ENCODE measurements at regions of chr17 and their contacts with region 1.

Region 1: GRCh38 chr17:62968445-62968923 is 2.4 kb downstream of the TANC2 start:
- DNase-seq: peak; percentile 87
- H3K4me3 Mint-ChIP-seq: no peak overlapping the region
- H3K27ac Mint-ChIP-seq: no peak overlapping the region
- H3K4me1 Mint-ChIP-seq: peaks cover 25% of the 10 kb centered on the region
- H3K27me3 Mint-ChIP-seq: peaks cover 55% of the 10 kb centered on the region

Region 2: DNA sequence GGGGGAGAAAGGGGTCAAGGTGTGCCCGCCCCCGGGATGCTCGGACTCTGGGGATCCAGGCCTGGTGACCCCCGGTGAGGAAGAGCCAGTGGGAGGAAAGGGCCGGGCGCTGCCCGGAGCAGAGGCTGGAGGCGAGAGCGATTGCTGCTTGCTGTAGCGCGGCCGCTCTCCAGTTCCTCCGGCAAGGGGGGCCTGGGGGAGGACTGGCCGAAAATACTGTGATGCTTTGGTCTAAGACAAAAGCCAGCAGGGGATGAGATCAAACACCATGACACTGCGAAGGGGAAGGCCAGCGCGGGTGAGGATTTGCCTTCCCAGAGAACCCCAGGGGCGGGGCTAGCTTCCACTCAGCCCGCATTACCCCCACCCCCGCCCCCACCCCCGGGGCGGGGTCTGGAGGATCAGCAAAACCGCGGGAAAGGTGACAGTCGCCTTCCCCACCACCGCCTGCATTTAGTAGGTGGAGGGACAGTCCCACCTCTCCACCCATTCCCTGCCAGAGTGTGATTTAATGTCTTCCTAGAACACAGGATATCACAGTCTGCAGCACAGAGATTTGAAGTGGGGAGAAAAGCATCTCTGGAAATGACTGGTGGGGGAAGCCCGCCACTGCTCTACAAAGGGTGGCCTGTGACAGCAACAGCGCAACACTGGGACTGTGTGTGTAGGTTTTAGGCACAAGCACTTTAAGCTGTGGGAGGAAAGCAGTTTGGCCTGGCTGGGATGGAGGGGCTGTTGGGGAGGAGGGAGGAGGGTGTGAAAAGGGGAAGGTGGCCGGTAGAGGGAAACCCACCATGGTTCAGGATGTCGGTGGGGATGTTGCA is 315.3 kb before region 1 on chr17:
- intact Hi-C with region 1: loop called (anchors 1 kb)
- DNase-seq: peak; percentile 91
- H3K4me3 Mint-ChIP-seq: peak overlapping the region; percentile 84
- H3K27ac Mint-ChIP-seq: peak overlapping the region; percentile 27
- H3K4me1 Mint-ChIP-seq: peaks cover 20% of the 10 kb centered on the region
- H3K27me3 Mint-ChIP-seq: peaks cover 72% of the 10 kb centered on the region

Region 3: DNA sequence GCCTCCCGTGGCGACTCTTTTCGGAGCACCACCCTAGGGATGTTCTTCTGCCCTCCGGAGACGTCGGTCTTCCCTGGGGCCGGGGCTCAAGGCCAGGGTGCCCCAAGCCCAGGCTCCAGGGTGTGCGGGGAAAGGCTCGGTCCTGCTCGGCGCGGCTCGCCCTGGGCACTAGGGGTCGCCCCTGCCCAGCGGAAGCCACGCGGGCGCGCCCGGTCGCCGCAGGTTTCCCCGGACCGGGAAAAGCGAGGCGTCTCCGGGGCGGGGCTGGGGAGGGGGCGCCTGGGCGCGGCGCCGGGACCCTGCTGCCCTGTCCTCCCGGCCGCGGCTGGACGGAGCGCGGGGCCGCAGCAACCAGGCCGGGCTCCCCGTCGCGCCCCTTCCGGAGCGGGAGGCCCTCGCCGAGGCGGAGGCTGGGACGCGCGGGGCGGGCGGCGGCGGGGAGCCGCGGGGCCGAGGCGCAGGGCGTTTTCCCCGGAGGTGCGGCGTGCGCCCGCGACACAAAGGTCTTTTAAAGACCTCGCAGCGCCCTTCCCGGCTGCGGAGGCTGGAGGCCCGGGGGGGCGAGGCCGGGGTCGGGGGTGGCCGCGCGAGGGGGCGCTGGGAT is 264.6 kb before region 1 on chr17:
- intact Hi-C with region 1: loop called (anchors 1 kb)
- DNase-seq: peak; percentile 91
- H3K4me3 Mint-ChIP-seq: peak overlapping the region; percentile 51
- H3K27ac Mint-ChIP-seq: no peak overlapping the region
- H3K4me1 Mint-ChIP-seq: peaks cover 4% of the 10 kb centered on the region
- H3K27me3 Mint-ChIP-seq: peaks cover 43% of the 10 kb centered on the region

Region 4: GRCh38 chr17:62724398-62725146 is 243.9 kb before region 1 on chr17:
- intact Hi-C with region 1: loop called (anchors 1 kb)
- DNase-seq: peak; percentile 86
- H3K4me3 Mint-ChIP-seq: peak overlapping the region; percentile 45
- H3K27ac Mint-ChIP-seq: peak overlapping the region; percentile 52
- H3K4me1 Mint-ChIP-seq: peaks cover 13% of the 10 kb centered on the region
- H3K27me3 Mint-ChIP-seq: peaks cover 78% of the 10 kb centered on the region

Region 5: GRCh38 chr17:62931101-62931500 is 37.4 kb before region 1 on chr17:
- intact Hi-C with region 1: no loop called
- DNase-seq: no peak
- H3K4me3 Mint-ChIP-seq: no peak overlapping the region
- H3K27ac Mint-ChIP-seq: no peak overlapping the region
- H3K4me1 Mint-ChIP-seq: no peaks in the 10 kb centered on the region
- H3K27me3 Mint-ChIP-seq: peaks cover 14% of the 10 kb centered on the region